ENCODE measurements at regions of chr1 and their contacts with region 1.

Region 1: GRCh38 chr1:11248155-11248554 is 14.2 kb downstream of the MTOR start:
- DNase-seq: no peak
- H3K4me3 ChIP-seq: no peak overlapping the region
- H3K27ac ChIP-seq: no peak overlapping the region
- H3K4me1 ChIP-seq: no peaks in the 10 kb centered on the region
- H3K27me3 ChIP-seq: no peaks in the 10 kb centered on the region
- CTCF ChIP-seq: no peak
- EP300 ChIP-seq: no peak
- POLR2A ChIP-seq: no peak

Region 2: DNA sequence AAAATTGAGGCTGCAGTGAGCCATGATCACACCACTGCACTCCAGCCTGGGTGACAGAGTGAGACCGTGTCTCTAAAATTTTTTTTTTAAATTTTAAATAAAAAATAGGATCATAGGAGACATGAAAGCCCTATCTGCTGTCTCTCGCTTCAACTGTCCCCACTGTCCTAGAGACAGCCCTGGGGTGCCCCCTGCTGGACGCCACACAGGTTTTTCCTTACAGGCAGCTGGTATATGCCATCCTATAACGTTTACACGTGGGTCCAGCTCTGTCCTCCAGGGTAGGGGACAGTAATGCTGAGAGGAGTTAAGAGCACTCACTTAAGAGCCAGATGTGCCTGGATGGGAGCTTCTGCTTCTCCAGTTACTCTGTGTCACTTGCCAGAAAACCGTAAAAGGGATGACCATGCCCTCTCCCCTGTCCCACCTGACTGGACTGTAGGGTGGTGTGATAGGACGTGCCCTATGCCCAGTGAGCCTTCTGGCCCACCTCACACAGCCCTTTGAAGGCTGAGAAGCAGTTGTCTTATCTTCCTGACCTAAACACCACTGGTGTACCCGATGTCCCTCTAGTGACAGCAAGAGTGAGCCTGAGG is 397.6 kb after region 1 on chr1:
- intact Hi-C with region 1: loop called (anchors 5 kb)
- DNase-seq: peak; percentile 82 to 89
- H3K4me3 ChIP-seq: no peak overlapping the region
- H3K27ac ChIP-seq: no peak overlapping the region
- H3K4me1 ChIP-seq: peaks cover 28 to 30% (median 29%) of the 10 kb centered on the region in 4 donors
- H3K27me3 ChIP-seq: peaks cover 0 to 66% (median 20%) of the 10 kb centered on the region in 3 donors
- CTCF ChIP-seq: peak in 5 of 7 experiments; percentile 24 to 72 (median 49)
- EP300 ChIP-seq: no peak
- POLR2A ChIP-seq: no peak

Measured in stomach (tissue), 19 donors.